SK-N-SH (cell line): ENCODE measurements at regions of chr11 and their contacts with region 1.

Region 1: DNA sequence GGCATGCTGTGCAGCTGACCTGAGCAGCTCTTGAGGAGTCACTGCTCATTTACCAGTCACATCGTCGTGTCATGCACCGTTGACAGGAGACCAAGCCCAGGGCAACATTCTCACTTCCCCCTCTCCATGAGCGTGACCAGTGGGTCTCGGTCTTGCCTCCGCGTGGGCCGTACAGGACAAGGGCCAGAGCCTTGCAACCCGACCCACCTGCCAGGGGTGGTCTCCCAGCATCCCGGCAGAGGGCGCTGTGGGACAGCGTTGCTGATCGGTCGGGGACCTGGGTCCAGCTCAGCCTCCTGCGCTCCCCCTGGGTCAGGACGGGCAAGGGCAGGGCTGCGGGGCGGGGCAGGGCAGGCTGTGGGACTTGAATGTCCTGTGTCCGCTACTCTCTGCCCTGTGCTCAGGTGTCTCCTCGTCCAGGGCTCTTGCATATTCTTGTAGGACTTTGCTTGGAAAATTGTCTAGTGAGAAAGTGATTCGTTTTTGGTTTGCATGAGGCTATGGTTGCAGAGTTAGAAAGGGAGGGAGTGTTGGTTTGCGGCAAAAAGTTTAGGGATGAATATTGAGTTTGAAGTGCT is 16.2 kb downstream of the EIF4G2 start:
- DNase-seq: peak; percentile 90
- H3K4me3 ChIP-seq: peak overlapping the region in 1 of 2 experiments; percentile 43; a peak in 1 of 4 replicates
- H3K27ac ChIP-seq: no peak overlapping the region
- H3K4me1 ChIP-seq: no peaks in the 10 kb centered on the region; a peak in 1 of 4 replicates
- H3K27me3 ChIP-seq: no peaks in the 10 kb centered on the region
- CTCF ChIP-seq: peak; percentile 85
- EP300 ChIP-seq: no peak
- RAD21 ChIP-seq: peak; percentile 87

Region 2: GRCh38 chr11:10709299-10710086 is 83.0 kb before region 1 on chr11:
- CTCF ChIA-PET with region 1: no interaction called
- POLR2A ChIA-PET with region 1: no interaction called
- DNase-seq: no peak
- H3K4me3 ChIP-seq: no peak overlapping the region
- H3K27ac ChIP-seq: no peak overlapping the region
- H3K4me1 ChIP-seq: no peaks in the 10 kb centered on the region
- H3K27me3 ChIP-seq: no peaks in the 10 kb centered on the region; the same call in 1 of the 2 replicates
- CTCF ChIP-seq: no peak
- EP300 ChIP-seq: no peak
- RAD21 ChIP-seq: no peak

Region 3: DNA sequence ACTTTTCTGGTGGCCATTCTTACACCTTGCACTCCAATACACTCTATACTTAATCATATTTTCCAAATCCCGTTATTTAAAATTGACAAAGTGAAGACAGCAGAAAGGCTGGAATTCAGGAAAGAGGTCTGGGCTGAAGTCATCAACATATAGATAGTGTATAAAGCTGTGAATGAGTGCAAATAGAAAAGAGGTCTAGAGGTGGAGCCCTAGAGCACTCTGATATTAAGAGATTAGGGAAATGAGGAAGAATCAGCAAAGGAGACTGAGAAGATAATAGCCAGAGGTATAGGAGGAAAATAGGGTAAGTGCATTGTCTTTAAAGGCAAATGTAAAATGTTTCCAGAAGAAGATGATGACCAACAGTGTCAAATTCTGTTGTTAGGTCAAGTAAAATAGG is 33.5 kb before region 1 on chr11:
- CTCF ChIA-PET with region 1: interaction called, 11 read pairs
- POLR2A ChIA-PET with region 1: no interaction called
- DNase-seq: no peak
- H3K4me3 ChIP-seq: no peak overlapping the region
- H3K27ac ChIP-seq: no peak overlapping the region
- H3K4me1 ChIP-seq: no peaks in the 10 kb centered on the region; a peak in 1 of 4 replicates
- H3K27me3 ChIP-seq: no peaks in the 10 kb centered on the region
- CTCF ChIP-seq: peak; percentile 47
- EP300 ChIP-seq: no peak
- RAD21 ChIP-seq: no peak

Region 4: GRCh38 chr11:10778217-10778970 is 14.1 kb before region 1 on chr11:
- CTCF ChIA-PET with region 1: interaction called, 22 read pairs
- POLR2A ChIA-PET with region 1: interaction called, 4 read pairs
- DNase-seq: peak; percentile 78
- H3K4me3 ChIP-seq: no peak overlapping the region
- H3K27ac ChIP-seq: peak overlapping the region; percentile 95 to 98
- H3K4me1 ChIP-seq: peaks cover 13 to 23% of the 10 kb centered on the region in 2 experiments; a peak in 3 of 4 replicates
- H3K27me3 ChIP-seq: no peaks in the 10 kb centered on the region
- CTCF ChIP-seq: no peak
- EP300 ChIP-seq: peak; percentile 27 to 83; a peak in 3 of 4 replicates
- RAD21 ChIP-seq: no peak

Region 5: GRCh38 chr11:10808553-10809372 is 16.3 kb after region 1 on chr11 and contains the start of gene EIF4G2:
- CTCF ChIA-PET with region 1: interaction called, 57 read pairs
- POLR2A ChIA-PET with region 1: interaction called, 30 read pairs
- DNase-seq: peak; percentile 97
- H3K4me3 ChIP-seq: peak within 1 kb of the TSS; percentile 75 to 93
- H3K27ac ChIP-seq: peak within 1 kb of the TSS; percentile 95 to 98
- H3K4me1 ChIP-seq: peaks cover 17 to 27% of the 10 kb centered on the region in 2 experiments
- H3K27me3 ChIP-seq: no peaks in the 10 kb centered on the region
- CTCF ChIP-seq: no peak
- EP300 ChIP-seq: no peak; a peak in 1 of 4 replicates
- RAD21 ChIP-seq: no peak; the same call in 1 of the 2 replicates
- polyA plus RNA-seq, gene EIF4G2: 298 and 394 TPM in 2 replicates

Region 6: DNA sequence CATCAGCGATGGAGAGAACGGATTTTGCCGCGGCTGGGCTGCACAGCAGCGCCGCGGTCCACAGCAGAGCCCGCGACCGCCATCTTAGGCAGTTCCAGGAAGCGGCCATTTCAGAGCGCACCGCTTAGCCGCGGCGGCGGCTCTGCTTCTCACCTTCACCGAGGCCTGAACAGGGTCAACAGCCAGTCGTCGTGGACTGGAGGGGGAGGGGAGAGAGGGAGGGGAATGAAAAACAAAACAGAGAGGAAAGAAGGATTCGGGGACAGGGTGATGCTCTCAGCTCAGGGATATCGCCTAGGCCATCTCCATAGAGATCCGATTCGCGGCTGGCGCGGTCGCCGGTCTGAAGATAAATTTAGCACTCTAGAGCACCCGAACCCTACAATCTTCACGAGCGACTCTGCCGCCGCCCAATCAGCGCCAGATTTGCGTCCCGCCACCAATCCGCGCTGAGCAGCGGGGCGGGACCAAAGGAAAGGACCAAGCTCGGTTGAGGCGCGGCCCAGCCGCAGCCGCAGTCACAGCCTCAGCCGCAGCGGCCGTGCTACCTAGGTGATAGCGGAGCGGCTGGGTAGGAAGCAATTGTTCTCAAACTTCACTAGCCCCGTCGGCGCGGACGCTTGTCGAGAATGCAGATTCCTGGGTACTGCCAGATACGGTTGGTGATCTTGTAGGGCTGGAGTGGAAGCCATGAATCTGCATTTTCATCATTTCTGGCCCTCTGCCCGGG is 65.4 kb after region 1 on chr11 and contains the start of gene ZBED5:
- CTCF ChIA-PET with region 1: interaction called, 17 read pairs
- POLR2A ChIA-PET with region 1: interaction called, 3 read pairs
- DNase-seq: peak; percentile 92
- H3K4me3 ChIP-seq: peak within 1 kb of the TSS; percentile 77 to 99
- H3K27ac ChIP-seq: peak within 1 kb of the TSS; percentile 97 to 100
- H3K4me1 ChIP-seq: peaks cover 0 to 11% of the 10 kb centered on the region in 2 experiments; a peak in 2 of 4 replicates
- H3K27me3 ChIP-seq: no peaks in the 10 kb centered on the region
- CTCF ChIP-seq: peak; percentile 24; the same call in 1 of the 2 replicates
- EP300 ChIP-seq: no peak; a peak in 1 of 4 replicates
- RAD21 ChIP-seq: no peak
- polyA plus RNA-seq, gene ZBED5: 23.5 and 31.2 TPM in 2 replicates

Region 7: DNA sequence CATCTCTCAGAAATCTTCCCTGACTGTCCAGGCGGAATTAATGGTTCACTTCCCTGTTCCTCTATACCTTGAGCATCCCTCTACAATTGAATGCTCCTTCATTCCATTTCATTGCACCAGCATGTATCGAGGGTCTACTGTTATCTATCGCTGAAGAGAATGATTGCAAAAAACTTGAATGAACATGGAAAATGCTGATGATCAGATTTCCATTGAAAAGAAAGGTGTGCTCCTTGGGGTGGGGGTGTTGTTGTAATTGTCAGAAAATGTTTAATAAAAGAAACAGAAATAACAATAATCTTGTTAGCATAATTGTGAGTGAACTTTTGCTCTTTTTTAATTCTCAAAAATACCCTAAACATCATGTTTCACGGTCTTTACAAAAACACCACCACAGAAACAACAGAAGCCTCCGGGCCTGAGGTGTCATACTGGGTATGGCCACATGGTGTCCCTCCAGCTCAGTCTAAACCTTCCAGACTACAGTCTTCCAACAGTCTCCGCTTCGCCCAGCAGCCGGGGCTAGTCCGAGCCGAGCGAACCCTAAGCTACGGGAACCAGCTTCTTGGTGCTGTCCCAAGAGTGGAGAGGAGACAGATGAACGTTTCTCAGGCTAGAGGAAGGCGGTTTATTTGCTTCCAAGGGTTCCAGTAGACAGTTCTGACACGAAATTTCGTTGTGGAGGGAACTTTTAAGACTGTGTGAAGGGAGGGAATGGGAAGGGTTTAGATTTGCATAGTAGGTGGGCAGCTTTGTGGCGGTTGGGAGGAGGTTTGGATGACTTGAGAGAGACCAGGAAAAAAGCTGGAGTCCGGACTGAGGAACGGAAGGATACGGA is 141.2 kb after region 1 on chr11:
- CTCF ChIA-PET with region 1: interaction called, 31 read pairs
- POLR2A ChIA-PET with region 1: no interaction called
- DNase-seq: peak; percentile 78
- H3K4me3 ChIP-seq: peak overlapping the region; percentile 44 to 54
- H3K27ac ChIP-seq: peak overlapping the region; percentile 30 to 69; a peak in 1 of 4 replicates
- H3K4me1 ChIP-seq: peaks cover 0 to 9% of the 10 kb centered on the region in 2 experiments; a peak in 1 of 4 replicates
- H3K27me3 ChIP-seq: no peaks in the 10 kb centered on the region
- CTCF ChIP-seq: peak; percentile 94
- EP300 ChIP-seq: no peak
- RAD21 ChIP-seq: peak; percentile 99

Region 8: GRCh38 chr11:11148104-11148509 is 355.6 kb after region 1 on chr11:
- CTCF ChIA-PET with region 1: no interaction called
- POLR2A ChIA-PET with region 1: no interaction called
- DNase-seq: no peak
- H3K4me3 ChIP-seq: no peak overlapping the region
- H3K27ac ChIP-seq: no peak overlapping the region
- H3K4me1 ChIP-seq: no peaks in the 10 kb centered on the region
- H3K27me3 ChIP-seq: no peaks in the 10 kb centered on the region
- CTCF ChIP-seq: peak; percentile 32; the same call in 1 of the 2 replicates
- EP300 ChIP-seq: no peak
- RAD21 ChIP-seq: no peak